ENCODE measurements at regions of chr15 and their contacts with region 1.

Region 1: DNA sequence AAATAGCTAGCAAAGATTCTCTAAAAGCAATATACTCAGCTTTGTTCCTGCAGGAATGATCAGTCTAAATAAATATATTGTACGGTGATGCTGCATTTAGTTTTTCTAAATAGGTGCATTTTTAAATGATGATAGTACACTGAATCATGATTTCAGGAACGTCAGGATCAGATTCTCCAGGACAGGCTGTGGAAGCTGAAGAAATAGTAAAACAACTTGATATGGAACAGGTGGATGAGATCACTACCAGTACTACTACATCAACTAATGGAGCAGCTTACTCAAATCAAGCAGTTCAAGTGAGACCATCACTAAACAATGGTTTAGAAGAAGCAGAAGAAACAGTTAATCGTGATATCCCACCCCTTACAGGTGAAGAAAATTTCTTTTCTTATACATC is 46.3 kb upstream of the EIF3J start:
- DNase-seq: no peak
- H3K4me3 ChIP-seq: no peak overlapping the region
- H3K27ac ChIP-seq: peak overlapping the region in 3 of 59 donors; percentile 5 to 50 (median 19)
- H3K27me3 ChIP-seq: no peaks in the 10 kb centered on the region
- CTCF ChIP-seq: no peak

Region 2: GRCh38 chr15:44435893-44436667 is 54.5 kb before region 1 on chr15:
- intact Hi-C with region 1: loop called in 1 of 2 experiments (anchors 10 kb)
- DNase-seq: no peak
- H3K4me3 ChIP-seq: no peak overlapping the region
- H3K27ac ChIP-seq: no peak overlapping the region
- H3K27me3 ChIP-seq: no peaks in the 10 kb centered on the region
- CTCF ChIP-seq: no peak